Activated CD4-positive, alpha-beta T cell treated with anti-CD3 and anti-CD28 coated beads, Interleukin-2, amount 10 ng/mL, durations not matched to agents 7 days and 5 days (primary cell): ENCODE measurements at regions of chr1 and their contacts with region 1.

Region 1: DNA sequence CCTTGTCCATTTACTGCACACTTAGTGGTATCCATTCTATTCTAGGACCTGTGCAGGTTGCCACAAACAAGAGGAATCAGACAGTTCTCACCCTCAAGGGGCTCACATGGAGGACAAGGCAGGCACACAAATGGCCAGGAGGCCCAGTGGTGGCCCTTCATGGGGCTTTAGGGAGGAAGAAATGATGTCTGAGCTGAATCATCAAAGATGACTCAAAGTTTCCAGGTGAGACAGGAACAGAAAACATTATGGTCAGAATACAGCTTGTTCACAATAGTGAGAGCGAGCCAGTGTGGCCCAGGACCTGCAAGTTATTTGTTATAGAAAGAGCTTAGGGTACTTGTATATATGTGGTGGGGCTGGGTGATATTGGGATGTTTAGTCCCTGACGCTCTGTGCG is 26.4 kb downstream of the SHISAL2A start:
- DNase-seq: no peak
- H3K4me3 Mint-ChIP-seq: no peak overlapping the region
- H3K27ac Mint-ChIP-seq: no peak overlapping the region
- H3K4me1 Mint-ChIP-seq: peaks cover 22% of the 10 kb centered on the region
- H3K27me3 Mint-ChIP-seq: no peaks in the 10 kb centered on the region

Region 2: DNA sequence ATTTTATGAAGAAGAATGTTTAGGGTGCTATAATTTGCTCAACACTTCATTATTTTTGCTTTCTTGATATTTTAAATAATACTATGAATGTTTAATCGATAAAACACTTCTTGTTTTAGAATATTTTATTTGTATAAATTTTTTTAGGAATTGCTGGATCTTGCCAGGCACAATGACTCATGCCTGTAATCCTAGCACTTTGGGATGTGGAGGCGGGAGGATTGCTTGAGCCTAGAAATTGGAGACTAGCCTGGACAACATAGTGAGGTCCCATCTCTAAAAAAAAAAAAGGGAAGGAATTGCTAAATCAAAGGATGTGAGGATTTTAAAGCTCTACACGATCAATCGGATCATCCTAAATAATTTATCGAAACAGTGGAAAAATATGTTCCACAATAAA is 1405.7 kb before region 1 on chr1:
- CTCF ChIA-PET with region 1: no interaction called
- POLR2A ChIA-PET with region 1: no interaction called
- DNase-seq: no peak
- H3K4me3 Mint-ChIP-seq: no peak overlapping the region
- H3K27ac Mint-ChIP-seq: no peak overlapping the region
- H3K4me1 Mint-ChIP-seq: peaks cover 11% of the 10 kb centered on the region
- H3K27me3 Mint-ChIP-seq: no peaks in the 10 kb centered on the region

Region 3: GRCh38 chr1:52460694-52461093 is 198.7 kb before region 1 on chr1:
- CTCF ChIA-PET with region 1: no interaction called
- POLR2A ChIA-PET with region 1: no interaction called
- DNase-seq: no peak
- H3K4me3 Mint-ChIP-seq: no peak overlapping the region
- H3K27ac Mint-ChIP-seq: no peak overlapping the region
- H3K4me1 Mint-ChIP-seq: no peaks in the 10 kb centered on the region
- H3K27me3 Mint-ChIP-seq: no peaks in the 10 kb centered on the region

Region 4: GRCh38 chr1:52669696-52670095 is 10.3 kb after region 1 on chr1:
- CTCF ChIA-PET with region 1: interaction called, 10 read pairs
- POLR2A ChIA-PET with region 1: no interaction called
- DNase-seq: no peak
- H3K4me3 Mint-ChIP-seq: no peak overlapping the region
- H3K27ac Mint-ChIP-seq: no peak overlapping the region
- H3K4me1 Mint-ChIP-seq: peaks cover 13% of the 10 kb centered on the region
- H3K27me3 Mint-ChIP-seq: no peaks in the 10 kb centered on the region